GM23248 (cell line): ENCODE measurements at regions of chr14 and their contacts with region 1.

Region 1: DNA sequence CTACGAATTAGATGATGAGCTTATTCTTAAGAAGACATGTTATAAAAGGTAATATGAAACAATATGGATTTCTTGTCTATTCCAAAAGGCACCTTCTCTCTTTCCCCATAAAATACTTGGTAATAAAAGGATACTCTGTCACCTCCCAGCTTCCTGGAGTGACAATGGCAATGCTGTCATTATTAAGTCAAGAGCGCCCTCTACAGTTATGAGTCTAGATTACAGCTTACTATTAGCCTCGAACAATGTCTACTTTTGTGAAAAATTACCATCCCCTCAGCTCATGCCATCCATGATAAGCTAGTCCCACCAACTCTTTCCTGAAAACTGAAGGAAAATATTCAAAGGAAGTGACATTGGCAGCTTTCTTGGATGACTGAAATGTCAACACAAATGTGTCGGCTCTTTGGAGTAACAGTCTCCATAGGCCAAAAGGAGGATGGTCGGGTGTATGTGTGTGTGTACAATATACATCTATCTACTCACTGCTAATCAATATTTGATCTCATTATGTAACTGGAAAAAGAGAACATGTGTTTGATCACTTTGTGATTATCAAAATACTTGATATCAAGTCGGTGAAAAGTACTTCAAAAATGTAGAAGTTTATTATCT is 48.7 kb upstream of the CDKN3 start:
- DNase-seq: peak; percentile 65
- H3K4me3 ChIP-seq: no peak overlapping the region
- H3K27ac ChIP-seq: no peak overlapping the region
- H3K4me1 ChIP-seq: peaks cover 17% of the 10 kb centered on the region
- H3K27me3 ChIP-seq: no peaks in the 10 kb centered on the region

Region 2: DNA sequence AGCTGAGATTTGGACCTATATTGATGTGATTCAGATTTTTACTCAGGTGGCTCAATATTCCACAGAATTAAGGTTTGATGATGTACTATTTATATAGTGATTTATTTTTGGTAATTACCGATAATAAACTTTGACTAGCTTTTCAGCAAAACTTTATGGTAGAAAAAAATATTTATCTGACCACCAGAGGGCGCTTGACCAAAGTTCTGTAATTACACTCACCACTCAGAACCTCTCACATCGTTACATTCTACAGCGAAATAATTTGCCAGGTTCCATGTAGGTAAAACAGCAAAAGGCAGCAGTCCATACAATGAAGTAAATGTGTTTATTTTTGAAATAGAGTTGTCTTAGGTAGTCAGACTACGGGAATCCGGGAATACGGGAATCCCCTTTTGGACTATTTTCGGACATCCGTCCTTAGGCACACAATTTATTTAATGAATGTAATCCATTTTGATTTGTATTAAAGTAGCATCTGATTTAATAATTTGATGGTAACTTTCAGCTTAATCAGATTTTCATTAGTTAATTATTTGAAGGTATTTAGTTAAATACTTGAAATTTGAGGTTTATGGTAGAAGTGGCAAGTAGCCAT is 1052.0 kb before region 1 on chr14:
- in situ Hi-C with region 1: loop called (anchors 10 kb)
- DNase-seq: peak; percentile 52
- H3K4me3 ChIP-seq: no peak overlapping the region
- H3K27ac ChIP-seq: no peak overlapping the region
- H3K4me1 ChIP-seq: no peaks in the 10 kb centered on the region
- H3K27me3 ChIP-seq: no peaks in the 10 kb centered on the region

Region 3: GRCh38 chr14:53979747-53980642 is 368.1 kb before region 1 on chr14:
- in situ Hi-C with region 1: no loop called
- DNase-seq: peak; percentile 56
- H3K4me3 ChIP-seq: no peak overlapping the region
- H3K27ac ChIP-seq: no peak overlapping the region
- H3K4me1 ChIP-seq: no peaks in the 10 kb centered on the region
- H3K27me3 ChIP-seq: peaks cover 4% of the 10 kb centered on the region

Region 4: DNA sequence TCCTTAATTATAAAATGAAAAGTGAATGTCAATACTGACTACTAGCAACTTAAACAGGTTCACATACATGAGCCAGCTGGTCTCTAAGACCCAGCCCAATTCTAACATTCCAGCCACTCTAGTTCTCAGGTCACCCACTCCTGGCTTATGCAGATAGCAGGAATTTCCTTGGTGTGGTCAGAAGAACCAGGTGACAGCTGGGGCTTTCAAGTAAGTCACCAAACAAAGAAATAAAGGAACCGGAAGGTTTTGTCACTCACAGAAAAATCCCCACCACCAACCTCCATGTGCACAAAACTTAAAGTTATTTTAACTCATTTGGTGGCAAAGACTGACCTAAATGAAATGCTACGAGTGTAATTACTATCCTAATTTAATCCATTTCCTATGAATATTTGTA is 80.9 kb before region 1 on chr14:
- in situ Hi-C with region 1: no loop called
- DNase-seq: no peak
- H3K4me3 ChIP-seq: no peak overlapping the region
- H3K27ac ChIP-seq: no peak overlapping the region
- H3K4me1 ChIP-seq: no peaks in the 10 kb centered on the region
- H3K27me3 ChIP-seq: no peaks in the 10 kb centered on the region; the same call in 1 of the 2 replicates

Region 5: GRCh38 chr14:54488646-54489317 is 140.7 kb after region 1 on chr14 and contains the start of gene GMFB:
- in situ Hi-C with region 1: no loop called
- DNase-seq: peak; percentile 97
- H3K4me3 ChIP-seq: peak within 1 kb of the TSS; percentile 88
- H3K27ac ChIP-seq: peak within 1 kb of the TSS; percentile 90
- H3K4me1 ChIP-seq: peaks cover 27% of the 10 kb centered on the region
- H3K27me3 ChIP-seq: no peaks in the 10 kb centered on the region
- total RNA-seq, gene GMFB: 110 and 286 TPM in 2 replicates

Region 6: GRCh38 chr14:54902143-54902520 is 554.0 kb after region 1 on chr14:
- in situ Hi-C with region 1: no loop called
- DNase-seq: peak; percentile 89
- H3K4me3 ChIP-seq: peak overlapping the region; percentile 82
- H3K27ac ChIP-seq: no peak overlapping the region
- H3K4me1 ChIP-seq: peaks cover 18% of the 10 kb centered on the region
- H3K27me3 ChIP-seq: no peaks in the 10 kb centered on the region